Heart left ventricle (tissue), 16 donors: ENCODE measurements at regions of chr3 and their contacts with region 1.

Region 1: DNA sequence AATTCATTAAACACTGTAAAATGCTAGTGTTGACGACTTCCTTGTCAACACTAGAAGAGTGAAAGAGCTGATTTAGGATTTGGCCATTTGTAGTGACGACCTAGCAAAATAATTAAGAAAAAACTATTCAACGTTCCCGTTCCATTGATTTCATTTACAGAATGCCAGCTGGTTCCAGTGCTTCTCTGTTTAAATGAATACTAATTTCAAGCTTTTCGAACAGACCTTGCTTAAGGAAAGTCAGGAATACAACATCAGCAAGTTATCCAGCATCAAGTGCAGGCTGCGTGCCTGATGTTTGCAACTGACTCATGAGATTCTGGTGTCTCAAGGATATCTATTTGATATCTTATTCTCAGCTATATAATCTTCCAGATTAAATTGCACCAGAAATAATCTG is 98.4 kb upstream of the BHLHE40 start:
- DNase-seq: no peak
- ATAC-seq: no peak
- H3K4me3 ChIP-seq: no peak overlapping the region
- H3K27ac ChIP-seq: no peak overlapping the region
- H3K4me1 ChIP-seq: no peaks in the 10 kb centered on the region
- H3K27me3 ChIP-seq: no peaks in the 10 kb centered on the region
- CTCF ChIP-seq: no peak
- POLR2A ChIP-seq: no peak

Region 2: DNA sequence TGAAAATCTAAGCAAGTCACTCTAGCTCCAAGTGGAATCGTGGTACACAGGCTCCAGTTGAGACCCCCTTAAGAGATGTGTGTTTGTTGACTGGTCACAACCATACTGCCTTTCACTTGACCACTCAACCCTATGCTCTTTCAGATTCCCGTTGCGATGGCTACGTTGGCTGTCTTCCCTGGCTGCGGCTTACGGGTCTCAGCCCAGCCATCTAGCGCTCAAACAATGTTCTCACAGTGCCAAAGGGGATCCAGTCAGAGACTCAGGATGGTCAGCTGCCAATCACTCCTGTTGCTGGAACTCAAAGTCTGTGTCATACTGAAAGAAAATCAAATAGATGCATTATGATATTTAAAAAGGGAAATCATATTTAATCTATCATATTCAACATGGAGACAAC is 150.1 kb before region 1 on chr3:
- intact Hi-C with region 1: loop called in 1 of 10 experiments (anchors 5 kb)
- DNase-seq: peak in 1 of 5 donors; percentile 49
- ATAC-seq: peak; percentile 47 to 72 (median 68)
- H3K4me3 ChIP-seq: no peak overlapping the region
- H3K27ac ChIP-seq: peak overlapping the region in 1 of 12 donors; percentile 10
- H3K4me1 ChIP-seq: peaks cover 0 to 42% (median 9%) of the 10 kb centered on the region in 12 donors
- H3K27me3 ChIP-seq: no peaks in the 10 kb centered on the region
- CTCF ChIP-seq: no peak
- POLR2A ChIP-seq: no peak

Region 3: DNA sequence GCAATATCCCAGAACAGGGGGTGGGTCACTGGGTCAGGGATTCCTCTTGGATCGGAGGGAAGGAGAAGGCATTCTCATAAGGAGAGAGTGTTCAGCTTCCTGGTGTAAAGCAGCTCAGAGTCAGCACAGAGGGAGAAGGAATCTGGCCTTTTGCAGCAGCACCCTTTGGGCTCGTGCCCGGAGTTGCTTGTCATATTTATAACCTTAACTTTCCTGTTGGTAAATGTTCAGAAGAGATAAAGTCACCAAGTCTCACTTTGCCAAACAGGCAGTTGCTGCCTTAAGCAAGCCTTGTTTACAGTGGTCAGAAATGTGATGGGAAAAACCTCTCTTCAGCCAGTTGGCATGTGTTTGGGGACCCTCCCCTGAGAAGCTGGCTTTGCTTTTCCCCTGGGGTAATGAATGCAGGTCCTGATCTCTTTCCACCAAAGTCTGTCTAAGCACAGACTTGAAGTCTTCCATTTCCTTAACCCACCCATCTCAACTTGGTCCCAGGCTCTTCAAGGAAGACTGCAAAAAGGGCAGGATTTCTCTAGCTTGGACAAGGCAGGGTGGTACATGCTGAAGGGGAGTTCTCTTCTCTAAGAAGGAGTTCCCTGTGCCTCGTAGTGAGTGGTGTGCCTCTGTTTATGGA is 108.6 kb before region 1 on chr3:
- intact Hi-C with region 1: no loop called
- DNase-seq: peak; percentile 82 to 92 (median 84)
- ATAC-seq: peak; percentile 86 to 91 (median 89)
- H3K4me3 ChIP-seq: peak overlapping the region in 1 of 12 donors; percentile 18
- H3K27ac ChIP-seq: peak overlapping the region; percentile 51 to 92 (median 81)
- H3K4me1 ChIP-seq: peaks cover 8 to 44% (median 32%) of the 10 kb centered on the region in 12 donors
- H3K27me3 ChIP-seq: no peaks in the 10 kb centered on the region
- CTCF ChIP-seq: no peak
- POLR2A ChIP-seq: no peak

Region 4: GRCh38 chr3:4935347-4935746 is 54.5 kb after region 1 on chr3:
- intact Hi-C with region 1: loop called in 1 of 10 experiments (anchors 5 kb)
- DNase-seq: no peak
- ATAC-seq: no peak
- H3K4me3 ChIP-seq: no peak overlapping the region
- H3K27ac ChIP-seq: no peak overlapping the region
- H3K4me1 ChIP-seq: no peaks in the 10 kb centered on the region
- H3K27me3 ChIP-seq: no peaks in the 10 kb centered on the region
- CTCF ChIP-seq: no peak
- POLR2A ChIP-seq: no peak

Region 5: GRCh38 chr3:4956738-4957137 is 75.9 kb after region 1 on chr3:
- intact Hi-C with region 1: loop called in 1 of 10 experiments (anchors 5 kb)
- DNase-seq: no peak
- ATAC-seq: no peak
- H3K4me3 ChIP-seq: no peak overlapping the region
- H3K27ac ChIP-seq: no peak overlapping the region
- H3K4me1 ChIP-seq: no peaks in the 10 kb centered on the region
- H3K27me3 ChIP-seq: no peaks in the 10 kb centered on the region
- CTCF ChIP-seq: no peak
- POLR2A ChIP-seq: no peak